Mammary epithelial cell (primary cell): ENCODE measurements at regions of chr6 and their contacts with region 1.

Region 1: DNA sequence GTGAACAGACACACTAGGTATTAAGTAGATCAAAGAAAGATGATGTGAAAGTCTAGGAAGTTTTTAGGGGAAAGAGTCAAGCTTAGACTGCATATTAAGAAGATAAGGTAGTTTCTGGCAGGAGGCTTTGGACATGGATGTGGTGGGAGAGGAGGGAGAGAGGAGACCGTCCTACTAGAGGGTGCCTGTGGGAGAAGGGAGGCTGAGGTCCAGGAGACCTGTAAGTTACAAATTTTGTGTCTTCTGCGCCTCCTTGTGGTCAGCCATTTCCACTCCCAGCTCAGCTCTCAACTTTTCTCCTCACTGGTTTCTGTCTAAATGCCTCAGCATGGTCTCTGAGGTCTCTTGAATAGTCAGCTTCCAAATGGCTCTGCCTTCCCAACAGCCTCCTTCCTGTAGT is 193.5 kb downstream of the UNC5CL start:
- DNase-seq: peak; percentile 30
- H3K4me3 ChIP-seq: no peak overlapping the region
- H3K27ac ChIP-seq: no peak overlapping the region
- H3K4me1 ChIP-seq: no peaks in the 10 kb centered on the region
- H3K27me3 ChIP-seq: peaks cover 5% of the 10 kb centered on the region
- CTCF ChIP-seq: peak; percentile 62 to 74

Region 2: GRCh38 chr6:40550202-40551101 is 295.1 kb before region 1 on chr6:
- CTCF ChIA-PET with region 1: no interaction called
- dilution Hi-C with region 1: no loop called
- in situ Hi-C with region 1: no loop called
- intact Hi-C with region 1: loop called (anchors 5 kb)
- DNase-seq: peak; percentile 19
- H3K4me3 ChIP-seq: no peak overlapping the region
- H3K27ac ChIP-seq: no peak overlapping the region
- H3K4me1 ChIP-seq: no peaks in the 10 kb centered on the region
- H3K27me3 ChIP-seq: no peaks in the 10 kb centered on the region
- CTCF ChIP-seq: peak; percentile 72 to 77

Region 3: GRCh38 chr6:40587240-40588069 is 258.1 kb before region 1 on chr6 and contains the start of gene LRFN2:
- CTCF ChIA-PET with region 1: no interaction called
- dilution Hi-C with region 1: no loop called
- in situ Hi-C with region 1: no loop called
- intact Hi-C with region 1: loop called (anchors 10 kb)
- DNase-seq: peak; percentile 70
- H3K4me3 ChIP-seq: peak within 1 kb of the TSS in 2 of 3 experiments; percentile 46 to 48
- H3K27ac ChIP-seq: no peak within 1 kb of the TSS
- H3K4me1 ChIP-seq: peaks cover 9% of the 10 kb centered on the region
- H3K27me3 ChIP-seq: peaks cover 8% of the 10 kb centered on the region
- CTCF ChIP-seq: peak; percentile 47 to 65
- total RNA-seq, gene LRFN2: not detected

Region 4: GRCh38 chr6:41494212-41495110 is 648.9 kb after region 1 on chr6:
- CTCF ChIA-PET with region 1: no interaction called
- dilution Hi-C with region 1: no loop called
- in situ Hi-C with region 1: no loop called
- intact Hi-C with region 1: no loop called
- DNase-seq: no peak
- H3K4me3 ChIP-seq: no peak overlapping the region
- H3K27ac ChIP-seq: no peak overlapping the region
- H3K4me1 ChIP-seq: no peaks in the 10 kb centered on the region
- H3K27me3 ChIP-seq: peaks cover 4% of the 10 kb centered on the region
- CTCF ChIP-seq: no peak